KBM-7 (cell line): ENCODE measurements at regions of chr19 and their contacts with region 1.

Region 1: GRCh38 chr19:56076498-56076897 is 44.6 kb downstream of the ZNF787 start:
- DNase-seq: peak; percentile 72

Region 2: DNA sequence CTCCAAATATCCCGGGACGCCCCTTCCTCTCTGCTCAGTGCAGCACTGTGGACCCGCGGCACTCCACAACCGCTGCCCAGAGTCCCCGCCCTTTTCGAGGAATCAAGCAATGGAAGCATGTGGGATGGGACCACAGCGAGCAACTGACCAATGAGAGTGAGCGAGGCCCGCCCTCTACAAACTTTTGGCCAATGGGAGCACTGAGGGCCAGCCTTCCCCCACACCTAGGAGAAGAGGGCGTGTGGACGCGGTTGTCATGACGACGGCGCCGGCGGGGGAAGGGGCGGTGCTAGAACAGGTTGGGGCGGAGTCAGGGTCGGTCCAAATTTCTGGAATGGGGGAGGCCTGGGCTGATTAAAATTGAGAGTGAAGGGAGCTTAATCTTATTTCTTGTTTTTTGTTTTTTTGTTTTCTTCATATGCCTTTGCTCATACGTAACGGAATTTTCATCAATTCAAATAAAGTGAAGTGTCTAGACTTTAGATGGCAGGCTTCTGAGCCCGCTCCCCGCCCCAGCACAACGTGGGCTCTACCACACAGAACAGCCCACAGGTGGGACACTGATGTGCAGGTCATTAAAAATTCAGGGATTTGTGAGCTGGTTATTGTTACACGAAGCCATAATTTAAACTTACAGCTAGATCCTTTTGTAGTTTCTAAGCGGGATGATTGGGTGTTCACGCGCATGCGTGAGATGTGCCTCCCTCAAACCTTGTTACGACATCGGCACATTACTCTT is 909.8 kb before region 1 on chr19 and contains the start of gene DNAAF3:
- in situ Hi-C with region 1: no loop called
- DNase-seq: peak; percentile 98

Region 3: DNA sequence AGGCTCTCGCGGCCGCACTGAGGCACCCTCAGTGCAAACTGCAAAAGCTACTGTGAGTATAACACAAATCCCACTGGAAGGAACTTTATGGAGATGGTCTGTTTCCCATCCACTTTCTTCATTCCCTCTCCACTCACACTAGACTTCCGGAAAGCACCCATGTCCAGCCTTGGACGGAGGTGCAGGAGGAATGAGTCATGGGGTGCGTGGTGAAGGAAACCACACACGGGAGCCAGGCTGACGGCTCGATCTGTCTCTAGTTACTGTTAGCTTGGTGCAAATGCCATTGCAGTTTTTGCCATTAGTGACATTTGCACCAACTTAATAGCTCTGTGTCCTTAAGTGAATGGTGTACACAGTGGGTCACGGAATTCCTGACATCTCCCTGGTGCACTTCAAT is 114.3 kb before region 1 on chr19:
- in situ Hi-C with region 1: no loop called
- DNase-seq: no peak

Region 4: GRCh38 chr19:56252699-56253422 is 176.4 kb after region 1 on chr19:
- in situ Hi-C with region 1: loop called (anchors 10 kb)
- DNase-seq: peak; percentile 85